Motor neuron (in vitro differentiated cells): ENCODE measurements at regions of chr12 and their contacts with region 1.

Region 1: GRCh38 chr12:98719515-98720504 is 74.7 kb downstream of the APAF1 start:
- ATAC-seq: no peak
- H3K4me3 ChIP-seq: no peak overlapping the region
- H3K27ac ChIP-seq: no peak overlapping the region
- H3K4me1 ChIP-seq: no peaks in the 10 kb centered on the region

Region 2: DNA sequence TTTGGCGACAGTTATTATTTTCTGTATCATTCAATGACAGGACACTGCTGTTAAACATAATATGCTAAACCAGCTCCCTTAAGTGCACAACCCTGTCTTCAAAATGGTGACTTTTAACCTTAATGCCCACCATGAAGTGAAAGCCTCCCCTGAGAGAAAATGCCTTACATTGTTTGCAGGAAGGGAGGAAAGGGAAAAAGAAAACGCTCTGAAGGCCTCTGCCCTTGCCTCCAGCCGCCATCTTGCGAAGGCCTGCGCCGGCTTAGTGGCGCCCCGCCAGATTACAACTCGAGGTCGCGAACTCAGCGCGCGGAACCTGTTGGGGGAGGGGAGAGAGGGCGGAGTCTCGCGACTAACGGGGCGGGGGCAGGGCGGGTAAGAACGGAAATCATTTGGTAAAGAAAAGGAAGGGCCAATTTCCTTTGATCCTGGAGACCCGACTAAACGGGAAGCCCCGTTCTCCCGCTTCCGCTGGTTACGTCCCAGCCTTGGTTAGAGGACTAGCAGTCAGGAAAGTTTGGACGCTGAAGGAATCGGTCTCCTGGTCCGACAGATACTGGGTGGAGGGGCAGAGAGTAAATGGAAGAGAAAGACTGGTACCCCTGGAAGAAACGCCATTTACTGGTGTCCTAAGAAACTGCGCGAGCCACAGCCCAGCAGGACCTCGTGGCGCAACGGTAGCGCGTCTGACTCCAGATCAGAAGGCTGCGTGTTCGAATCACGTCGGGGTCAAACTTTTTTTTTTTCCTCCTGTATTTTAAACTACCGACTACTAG is 216.0 kb before region 1 on chr12:
- in situ Hi-C with region 1: no loop called
- ATAC-seq: peak; percentile 68 to 88 (median 84)
- H3K4me3 ChIP-seq: peak overlapping the region; percentile 60 to 86 (median 76)
- H3K27ac ChIP-seq: peak overlapping the region; percentile 94 to 97
- H3K4me1 ChIP-seq: no peaks in the 10 kb centered on the region

Region 3: GRCh38 chr12:98578821-98579220 is 141.0 kb before region 1 on chr12:
- in situ Hi-C with region 1: no loop called
- ATAC-seq: peak in 5 of 8 experiments; percentile 35 to 97 (median 59)
- H3K4me3 ChIP-seq: no peak overlapping the region
- H3K27ac ChIP-seq: no peak overlapping the region
- H3K4me1 ChIP-seq: no peaks in the 10 kb centered on the region

Region 4: GRCh38 chr12:98894412-98895085 is 174.7 kb after region 1 on chr12:
- in situ Hi-C with region 1: no loop called
- ATAC-seq: peak in 7 of 8 experiments; percentile 34 to 86 (median 83)
- H3K4me3 ChIP-seq: peak overlapping the region; percentile 48 to 94 (median 81)
- H3K27ac ChIP-seq: peak overlapping the region; percentile 50 to 86
- H3K4me1 ChIP-seq: peaks cover 9 to 13% of the 10 kb centered on the region in 2 donors

Region 5: GRCh38 chr12:98939350-98939749 is 219.5 kb after region 1 on chr12:
- in situ Hi-C with region 1: loop called in 1 of 9 experiments (anchors 25 kb)
- ATAC-seq: peak in 4 of 8 experiments; percentile 30 to 78 (median 71)
- H3K4me3 ChIP-seq: no peak overlapping the region
- H3K27ac ChIP-seq: no peak overlapping the region
- H3K4me1 ChIP-seq: peaks cover 0 to 6% of the 10 kb centered on the region in 2 donors